HEK293 (cell line): ENCODE measurements at regions of chr15 and their contacts with region 1.

Region 1: DNA sequence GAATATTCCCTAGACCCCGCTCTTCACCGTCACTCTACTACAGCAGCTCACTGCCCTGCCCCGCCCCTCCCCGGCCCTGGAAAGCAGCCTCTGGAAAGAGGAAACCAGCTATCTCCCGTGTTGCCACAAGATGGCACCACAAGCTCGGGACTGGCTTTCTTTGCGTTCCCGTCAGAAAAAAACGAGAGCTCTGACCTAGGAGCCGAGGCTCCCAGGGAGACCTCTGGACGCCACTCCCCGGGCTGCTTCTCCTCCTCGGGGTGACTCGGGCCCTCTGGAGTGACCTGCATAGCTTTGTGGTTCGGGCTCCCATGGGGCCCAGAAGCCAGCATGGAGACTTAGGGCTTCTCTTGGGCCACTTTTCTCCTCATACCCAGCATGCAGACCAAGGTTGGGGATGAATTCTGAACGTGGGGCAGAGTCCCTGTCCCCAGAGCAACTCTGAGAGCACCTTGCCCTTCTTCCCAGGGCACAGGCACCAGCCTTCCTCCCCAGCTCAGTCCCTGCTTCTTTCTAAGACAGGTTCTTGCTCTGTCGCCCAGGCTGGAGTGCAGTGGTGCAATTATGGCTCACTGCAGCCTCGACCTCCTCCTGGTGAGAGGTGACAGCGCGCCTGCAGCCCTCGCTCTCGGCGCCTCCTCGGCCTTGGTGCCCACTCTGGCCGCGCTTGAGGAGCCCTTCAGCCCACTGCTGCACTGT is 19.0 kb downstream of the STOML1 start:
- H3K4me3 ChIP-seq: no peak overlapping the region
- H3K27ac ChIP-seq: no peak overlapping the region
- H3K4me1 ChIP-seq: no peaks in the 10 kb centered on the region; the same call in 1 of the 2 replicates
- CTCF ChIP-seq: peak; percentile 95

Region 2: GRCh38 chr15:73601451-73602445 is 371.4 kb before region 1 on chr15:
- CTCF ChIA-PET with region 1: no interaction called
- POLR2A ChIA-PET with region 1: no interaction called
- H3K4me3 ChIP-seq: no peak overlapping the region
- H3K27ac ChIP-seq: no peak overlapping the region
- H3K4me1 ChIP-seq: peaks cover 52% of the 10 kb centered on the region
- CTCF ChIP-seq: no peak

Region 3: GRCh38 chr15:73862276-73862675 is 110.9 kb before region 1 on chr15:
- CTCF ChIA-PET with region 1: no interaction called
- POLR2A ChIA-PET with region 1: no interaction called
- H3K4me3 ChIP-seq: no peak overlapping the region
- H3K27ac ChIP-seq: no peak overlapping the region
- H3K4me1 ChIP-seq: no peaks in the 10 kb centered on the region
- CTCF ChIP-seq: no peak

Region 4: GRCh38 chr15:73991726-73992593 is 18.8 kb after region 1 on chr15 and contains the start of gene STOML1:
- CTCF ChIA-PET with region 1: interaction called, 118 read pairs
- POLR2A ChIA-PET with region 1: interaction called, 6 read pairs
- H3K4me3 ChIP-seq: peak within 1 kb of the TSS; percentile 66
- H3K27ac ChIP-seq: no peak within 1 kb of the TSS
- H3K4me1 ChIP-seq: peaks cover 9% of the 10 kb centered on the region; the same call in 1 of the 2 replicates
- CTCF ChIP-seq: peak; percentile 93

Region 5: GRCh38 chr15:74011610-74012009 is 38.5 kb after region 1 on chr15:
- CTCF ChIA-PET with region 1: interaction called, 18 read pairs
- POLR2A ChIA-PET with region 1: no interaction called
- H3K4me3 ChIP-seq: no peak overlapping the region
- H3K27ac ChIP-seq: no peak overlapping the region
- H3K4me1 ChIP-seq: no peaks in the 10 kb centered on the region
- CTCF ChIP-seq: no peak

Region 6: GRCh38 chr15:74027688-74028087 is 54.6 kb after region 1 on chr15:
- CTCF ChIA-PET with region 1: interaction called, 10 read pairs
- POLR2A ChIA-PET with region 1: no interaction called
- H3K4me3 ChIP-seq: no peak overlapping the region
- H3K27ac ChIP-seq: no peak overlapping the region
- H3K4me1 ChIP-seq: no peaks in the 10 kb centered on the region
- CTCF ChIP-seq: no peak

Region 7: DNA sequence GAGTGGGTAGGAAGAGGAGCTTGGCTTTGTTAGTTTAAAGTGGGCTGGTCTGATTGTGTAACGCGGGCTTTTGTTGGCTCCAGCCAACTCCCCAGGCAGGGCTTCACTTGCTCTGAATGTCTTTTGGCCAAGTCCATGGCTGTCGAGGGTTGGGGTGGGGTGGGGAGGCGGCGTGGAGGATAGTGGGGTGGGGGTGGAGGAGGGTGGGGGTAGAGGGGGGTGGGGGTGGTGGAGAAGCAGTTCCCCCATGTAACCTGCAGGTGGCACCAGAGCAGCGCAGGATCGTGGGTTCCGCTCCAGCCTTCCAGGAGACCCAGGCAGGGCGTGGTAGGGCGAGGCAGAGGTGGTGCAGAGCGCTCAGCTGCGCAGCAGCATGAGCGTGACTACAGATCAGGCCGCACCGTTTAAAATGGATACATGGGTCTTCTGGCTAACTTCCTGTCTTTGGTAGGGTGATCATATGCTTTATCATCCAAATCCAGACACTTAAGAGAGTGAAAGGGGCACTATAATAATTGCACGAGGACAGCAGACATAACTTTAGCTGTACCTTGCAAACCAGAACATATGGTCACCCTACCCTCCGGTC is 80.9 kb after region 1 on chr15:
- CTCF ChIA-PET with region 1: interaction called, 151 read pairs
- POLR2A ChIA-PET with region 1: no interaction called
- H3K4me3 ChIP-seq: no peak overlapping the region
- H3K27ac ChIP-seq: no peak overlapping the region
- H3K4me1 ChIP-seq: no peaks in the 10 kb centered on the region
- CTCF ChIP-seq: no peak